Naive thymus-derived CD4-positive, alpha-beta T cell (primary cell): ENCODE measurements at regions of chr17 and their contacts with region 1.

Region 1: GRCh38 chr17:77494664-77495435 is 354.1 kb downstream of the SEC14L1 start:
- DNase-seq: peak; percentile 60 to 82 (median 70)
- ATAC-seq: peak; percentile 90
- H3K4me3 ChIP-seq: no peak overlapping the region
- H3K4me3 Mint-ChIP-seq: peak overlapping the region in 6 of 10 donors; percentile 19 to 54 (median 44)
- H3K27ac ChIP-seq: peak overlapping the region; percentile 27
- H3K27ac Mint-ChIP-seq: peak overlapping the region; percentile 71 to 94 (median 91)
- H3K4me1 ChIP-seq: peaks cover 11 to 21% of the 10 kb centered on the region in 2 donors
- H3K4me1 Mint-ChIP-seq: peaks cover 5 to 37% (median 20%) of the 10 kb centered on the region in 7 donors
- H3K27me3 ChIP-seq: no peaks in the 10 kb centered on the region
- H3K27me3 Mint-ChIP-seq: no peaks in the 10 kb centered on the region

Region 2: DNA sequence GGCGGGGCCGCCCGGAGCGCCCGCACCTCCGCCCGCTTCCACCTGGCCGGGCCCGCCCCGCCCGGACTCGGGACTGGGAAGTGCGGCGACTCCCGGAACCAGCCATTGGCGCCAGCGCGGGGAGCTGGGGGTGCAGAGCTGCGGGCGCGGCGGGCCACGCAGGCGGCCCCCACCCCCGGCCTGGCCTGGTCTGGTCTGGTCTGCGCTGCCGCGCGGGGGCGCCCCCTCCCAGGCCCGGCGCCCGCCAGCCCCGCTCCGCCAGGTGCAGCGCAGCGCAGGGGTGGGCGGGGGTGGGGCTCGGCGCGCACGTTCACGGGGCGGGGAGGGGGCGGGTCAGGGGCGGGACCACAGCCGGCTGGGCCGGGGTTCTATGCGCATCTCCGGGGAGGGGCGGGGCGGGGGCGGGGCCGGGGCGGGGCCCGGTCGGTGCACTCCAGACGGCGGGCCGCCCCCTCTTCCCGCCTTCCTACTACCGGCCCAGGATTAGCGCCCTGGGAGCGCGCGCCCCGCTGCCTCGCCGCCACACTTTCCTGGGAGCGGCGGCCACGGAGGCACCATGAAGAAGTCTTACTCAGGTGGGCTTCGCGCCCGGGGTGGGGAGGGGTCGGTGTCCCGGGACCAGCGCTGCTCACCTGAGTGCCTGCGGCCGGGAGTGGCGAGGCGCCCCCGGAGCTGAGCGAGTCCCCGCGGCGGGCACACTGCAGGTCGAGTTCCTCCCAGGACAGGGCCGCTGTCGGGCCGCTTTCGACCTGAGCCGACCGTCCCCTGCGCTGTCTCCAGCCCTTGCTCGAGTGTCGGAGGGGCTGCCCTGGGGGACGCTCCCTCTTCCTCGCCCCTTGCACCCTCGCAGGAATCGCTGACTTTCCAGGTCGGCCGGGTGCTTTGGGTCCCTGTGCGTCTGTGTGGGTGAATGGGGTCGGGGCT is 213.6 kb before region 1 on chr17:
- CTCF ChIA-PET with region 1: no interaction called
- POLR2A ChIA-PET with region 1: interaction called, 4 read pairs
- intact Hi-C with region 1: loop called in 1 of 2 experiments (anchors 1 kb)
- DNase-seq: peak; percentile 62 to 79 (median 72)
- ATAC-seq: peak; percentile 94
- H3K4me3 ChIP-seq: peak overlapping the region; percentile 54
- H3K4me3 Mint-ChIP-seq: peak overlapping the region; percentile 75 to 88 (median 78)
- H3K27ac ChIP-seq: no peak overlapping the region
- H3K27ac Mint-ChIP-seq: peak overlapping the region; percentile 67 to 95 (median 87)
- H3K4me1 ChIP-seq: peaks cover 3 to 10% of the 10 kb centered on the region in 2 donors
- H3K4me1 Mint-ChIP-seq: peaks cover 13 to 20% (median 17%) of the 10 kb centered on the region in 7 donors
- H3K27me3 ChIP-seq: no peaks in the 10 kb centered on the region
- H3K27me3 Mint-ChIP-seq: peaks cover 0 to 47% (median 11%) of the 10 kb centered on the region in 5 donors

Region 3: GRCh38 chr17:77404812-77405581 is 89.9 kb before region 1 on chr17:
- CTCF ChIA-PET with region 1: interaction called, 26 read pairs
- POLR2A ChIA-PET with region 1: interaction called, 14 read pairs
- intact Hi-C with region 1: loop called (anchors 1 kb)
- DNase-seq: peak; percentile 48 to 86 (median 84)
- ATAC-seq: peak; percentile 88
- H3K4me3 ChIP-seq: peak overlapping the region; percentile 66
- H3K4me3 Mint-ChIP-seq: peak overlapping the region; percentile 83 to 100 (median 95)
- H3K27ac ChIP-seq: peak overlapping the region; percentile 81
- H3K27ac Mint-ChIP-seq: peak overlapping the region; percentile 95 to 100 (median 97)
- H3K4me1 ChIP-seq: peaks cover 89 to 91% of the 10 kb centered on the region in 2 donors
- H3K4me1 Mint-ChIP-seq: peaks cover 71 to 97% (median 87%) of the 10 kb centered on the region in 7 donors
- H3K27me3 ChIP-seq: no peaks in the 10 kb centered on the region
- H3K27me3 Mint-ChIP-seq: no peaks in the 10 kb centered on the region

Region 4: GRCh38 chr17:77456951-77457548 is 37.8 kb before region 1 on chr17:
- CTCF ChIA-PET with region 1: interaction called, 5 read pairs
- POLR2A ChIA-PET with region 1: interaction called, 6 read pairs
- intact Hi-C with region 1: loop called in 1 of 2 experiments (anchors 1 kb)
- DNase-seq: peak in 3 of 9 donors; percentile 17 to 44 (median 40)
- ATAC-seq: peak; percentile 35
- H3K4me3 ChIP-seq: peak overlapping the region; percentile 77
- H3K4me3 Mint-ChIP-seq: peak overlapping the region; percentile 92 to 100 (median 98)
- H3K27ac ChIP-seq: peak overlapping the region; percentile 92
- H3K27ac Mint-ChIP-seq: peak overlapping the region; percentile 93 to 100 (median 98)
- H3K4me1 ChIP-seq: peaks cover 46 to 57% of the 10 kb centered on the region in 2 donors
- H3K4me1 Mint-ChIP-seq: peaks cover 34 to 76% (median 48%) of the 10 kb centered on the region in 7 donors
- H3K27me3 ChIP-seq: no peaks in the 10 kb centered on the region
- H3K27me3 Mint-ChIP-seq: no peaks in the 10 kb centered on the region

Region 5: DNA sequence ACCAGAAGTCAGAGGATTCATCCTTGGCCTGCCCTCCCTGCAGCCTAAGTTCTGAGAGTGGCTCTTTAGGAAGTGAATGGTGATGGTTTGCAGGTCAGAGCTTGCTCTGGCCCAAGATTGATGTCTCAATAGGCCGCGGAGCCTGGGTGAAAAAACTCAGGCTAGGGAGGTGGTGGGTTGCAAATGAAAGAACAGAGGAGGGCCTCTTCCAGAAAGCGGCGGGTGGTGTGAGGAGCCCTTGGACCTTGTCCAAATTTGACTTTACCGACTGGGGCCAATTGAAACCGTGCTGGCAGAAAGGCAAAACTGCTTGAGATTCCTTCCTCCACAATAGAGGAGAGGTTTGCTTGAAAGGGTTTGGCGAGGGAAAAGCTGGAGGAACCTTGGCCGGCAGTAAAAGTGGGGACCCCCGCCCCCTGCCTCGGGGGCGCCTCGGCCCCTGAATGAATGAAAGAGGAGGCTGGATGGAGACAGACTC is 22.8 kb before region 1 on chr17:
- CTCF ChIA-PET with region 1: interaction called, 4 read pairs
- POLR2A ChIA-PET with region 1: interaction called, 3 read pairs
- intact Hi-C with region 1: loop called in 1 of 2 experiments (anchors 2 kb)
- DNase-seq: no peak
- ATAC-seq: no peak
- H3K4me3 ChIP-seq: peak overlapping the region; percentile 15
- H3K4me3 Mint-ChIP-seq: peak overlapping the region; percentile 67 to 90 (median 74)
- H3K27ac ChIP-seq: peak overlapping the region; percentile 71
- H3K27ac Mint-ChIP-seq: peak overlapping the region; percentile 87 to 99 (median 94)
- H3K4me1 ChIP-seq: peaks cover 90 to 99% of the 10 kb centered on the region in 2 donors
- H3K4me1 Mint-ChIP-seq: peaks cover 85 to 100% (median 92%) of the 10 kb centered on the region in 7 donors
- H3K27me3 ChIP-seq: no peaks in the 10 kb centered on the region
- H3K27me3 Mint-ChIP-seq: no peaks in the 10 kb centered on the region

Region 6: GRCh38 chr17:77602062-77602746 is 107.4 kb after region 1 on chr17:
- CTCF ChIA-PET with region 1: no interaction called
- POLR2A ChIA-PET with region 1: no interaction called
- intact Hi-C with region 1: no loop called
- DNase-seq: no peak
- ATAC-seq: no peak
- H3K4me3 ChIP-seq: no peak overlapping the region
- H3K4me3 Mint-ChIP-seq: no peak overlapping the region
- H3K27ac ChIP-seq: no peak overlapping the region
- H3K27ac Mint-ChIP-seq: no peak overlapping the region
- H3K4me1 ChIP-seq: no peaks in the 10 kb centered on the region
- H3K4me1 Mint-ChIP-seq: no peaks in the 10 kb centered on the region
- H3K27me3 ChIP-seq: no peaks in the 10 kb centered on the region
- H3K27me3 Mint-ChIP-seq: peaks cover 0 to 25% (median 0%) of the 10 kb centered on the region in 5 donors